Endothelial cell of umbilical vein (primary cell): ENCODE measurements at regions of chr3 and their contacts with region 1.

Region 1: DNA sequence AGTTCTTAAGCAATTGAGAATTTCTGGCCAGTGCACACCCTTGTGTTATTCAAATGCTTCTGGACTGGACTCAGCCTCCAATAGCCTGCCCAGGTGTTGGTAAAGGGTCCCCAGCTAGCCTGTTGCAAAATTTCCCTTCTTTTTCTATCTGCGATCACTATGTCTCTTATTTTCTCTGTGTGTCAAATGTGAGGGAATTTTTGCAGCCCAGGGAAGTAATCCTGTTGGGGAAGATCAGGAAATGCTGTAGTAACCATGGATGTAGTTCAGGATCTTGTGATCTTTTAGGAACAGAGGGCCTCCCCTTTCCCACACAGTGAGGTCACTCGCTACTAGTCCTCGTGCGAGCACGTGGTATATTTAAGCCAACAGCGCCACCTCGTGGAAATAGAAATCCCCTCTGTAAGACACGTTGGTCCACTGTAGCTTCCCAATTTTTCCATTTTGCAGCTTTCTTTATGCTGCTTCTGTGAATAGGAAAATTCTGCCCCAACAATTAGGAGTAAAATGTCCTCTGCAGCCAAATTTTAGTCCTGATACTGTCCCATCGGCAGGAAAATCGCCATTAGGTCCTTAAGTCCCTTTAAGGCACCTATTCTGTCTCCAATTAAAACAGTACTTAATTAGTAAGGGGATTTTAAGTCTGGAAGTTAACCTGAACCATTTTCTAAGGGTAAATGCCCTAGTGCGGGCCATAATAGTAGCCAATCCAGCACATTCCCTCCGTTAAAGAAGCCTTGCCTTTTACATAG is 4.0 kb upstream of the SMCO1 start:
- DNase-seq: peak; percentile 62
- H3K4me3 ChIP-seq: no peak overlapping the region
- H3K27ac ChIP-seq: no peak overlapping the region
- H3K4me1 ChIP-seq: no peaks in the 10 kb centered on the region
- H3K27me3 ChIP-seq: no peaks in the 10 kb centered on the region
- CTCF ChIP-seq: peak; percentile 32 to 44
- POLR2A ChIP-seq: no peak

Region 2: DNA sequence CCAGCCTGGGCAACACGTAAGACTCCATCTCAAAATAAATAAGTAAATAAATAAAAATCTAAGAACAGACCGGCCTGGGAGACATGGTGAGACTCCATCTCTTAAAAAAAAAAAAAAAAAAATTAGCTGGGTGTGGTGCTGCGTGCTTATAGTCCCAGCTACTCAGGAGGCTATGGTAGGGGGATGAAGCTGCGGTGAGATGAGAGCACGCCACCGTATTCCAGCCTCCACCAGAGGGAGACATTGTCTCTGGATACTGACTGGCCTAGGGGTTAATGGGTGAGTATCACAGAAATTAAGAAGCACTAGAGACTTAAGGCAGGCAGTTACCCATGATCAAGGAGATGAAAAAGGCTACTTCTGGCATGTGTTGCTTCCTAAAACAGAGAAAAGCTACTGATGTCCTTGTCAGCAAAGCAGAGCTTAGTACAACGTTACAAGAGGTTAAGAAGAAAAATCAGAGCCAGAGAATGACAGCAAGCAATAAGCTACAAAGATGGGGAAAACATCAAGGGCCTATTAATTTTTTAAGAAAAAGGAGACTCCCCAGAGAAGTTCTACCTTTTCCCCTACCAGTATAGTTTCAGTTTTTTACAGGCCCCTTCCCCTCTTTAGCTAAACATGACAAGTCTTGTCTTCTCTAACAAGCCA is 445.8 kb before region 1 on chr3:
- CTCF ChIA-PET with region 1: interaction called, 13 read pairs
- POLR2A ChIA-PET with region 1: no interaction called
- dilution Hi-C with region 1: no loop called
- intact Hi-C with region 1: loop called (anchors 1 kb)
- DNase-seq: peak; percentile 66
- H3K4me3 ChIP-seq: no peak overlapping the region
- H3K27ac ChIP-seq: no peak overlapping the region
- H3K4me1 ChIP-seq: no peaks in the 10 kb centered on the region
- H3K27me3 ChIP-seq: no peaks in the 10 kb centered on the region
- CTCF ChIP-seq: peak; percentile 72 to 80
- POLR2A ChIP-seq: no peak

Region 3: DNA sequence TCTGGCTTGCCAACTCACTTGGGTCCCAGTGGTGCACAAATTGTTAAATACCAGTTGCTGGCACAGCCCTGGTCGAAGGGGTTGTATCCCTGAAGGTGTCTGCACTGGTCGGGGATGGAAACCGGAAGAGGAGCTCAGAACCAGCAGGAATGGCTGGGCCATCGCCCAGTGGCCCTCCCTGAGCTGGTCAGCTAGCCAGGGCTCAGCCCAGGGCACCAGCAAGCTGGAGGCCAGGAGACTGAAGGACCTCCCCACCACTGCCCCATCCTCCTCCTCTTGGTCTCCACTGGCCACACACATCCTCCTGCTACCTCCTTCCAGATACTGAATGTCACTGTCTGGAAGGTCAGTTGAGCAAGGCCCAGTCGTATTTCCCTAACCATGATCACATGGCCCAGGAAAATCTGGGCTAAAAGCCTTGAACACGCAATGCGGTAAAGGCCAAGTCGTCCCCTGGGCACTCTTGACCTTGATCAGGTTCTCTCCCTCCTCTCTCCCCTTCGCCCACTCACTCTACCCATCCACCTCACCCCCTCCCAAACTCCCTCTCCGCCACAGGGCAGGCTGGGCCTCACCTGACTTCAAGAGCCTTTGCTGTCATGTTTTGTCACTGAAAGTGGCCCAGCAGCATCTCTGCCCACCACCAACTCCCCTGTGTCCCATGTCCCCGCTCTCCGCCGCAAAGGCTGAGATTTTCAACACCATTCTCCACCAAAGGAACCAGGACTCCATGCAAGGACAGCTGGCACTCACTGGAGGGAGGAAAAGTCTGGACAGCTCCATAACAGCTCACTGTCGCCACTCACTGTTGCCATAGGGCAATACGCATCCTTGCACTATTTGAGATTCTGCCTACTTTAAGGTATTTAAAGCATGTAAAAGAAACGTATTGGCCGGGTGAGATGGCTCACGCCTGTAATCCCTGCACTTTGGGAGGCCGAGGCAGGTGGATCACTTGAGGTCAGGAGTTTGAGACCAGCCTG is 320.1 kb before region 1 on chr3:
- CTCF ChIA-PET with region 1: no interaction called
- POLR2A ChIA-PET with region 1: no interaction called
- dilution Hi-C with region 1: no loop called
- intact Hi-C with region 1: loop called (anchors 5 kb)
- DNase-seq: no peak
- H3K4me3 ChIP-seq: no peak overlapping the region
- H3K27ac ChIP-seq: no peak overlapping the region
- H3K4me1 ChIP-seq: no peaks in the 10 kb centered on the region
- H3K27me3 ChIP-seq: peaks cover 2% of the 10 kb centered on the region in 2 experiments
- CTCF ChIP-seq: peak in 1 of 2 donors; percentile 9
- POLR2A ChIP-seq: no peak

Region 4: GRCh38 chr3:196251918-196252317 is 267.2 kb before region 1 on chr3:
- CTCF ChIA-PET with region 1: interaction called, 75 read pairs
- POLR2A ChIA-PET with region 1: no interaction called
- dilution Hi-C with region 1: no loop called
- intact Hi-C with region 1: loop called (anchors 1 kb)
- DNase-seq: no peak
- H3K4me3 ChIP-seq: no peak overlapping the region
- H3K27ac ChIP-seq: no peak overlapping the region
- H3K4me1 ChIP-seq: no peaks in the 10 kb centered on the region
- H3K27me3 ChIP-seq: no peaks in the 10 kb centered on the region
- CTCF ChIP-seq: no peak
- POLR2A ChIP-seq: no peak

Region 5: GRCh38 chr3:196292291-196292923 is 226.7 kb before region 1 on chr3:
- CTCF ChIA-PET with region 1: no interaction called
- POLR2A ChIA-PET with region 1: no interaction called
- dilution Hi-C with region 1: no loop called
- intact Hi-C with region 1: no loop called
- DNase-seq: no peak
- H3K4me3 ChIP-seq: no peak overlapping the region
- H3K27ac ChIP-seq: no peak overlapping the region
- H3K4me1 ChIP-seq: no peaks in the 10 kb centered on the region
- H3K27me3 ChIP-seq: no peaks in the 10 kb centered on the region
- CTCF ChIP-seq: no peak
- POLR2A ChIP-seq: no peak

Region 6: DNA sequence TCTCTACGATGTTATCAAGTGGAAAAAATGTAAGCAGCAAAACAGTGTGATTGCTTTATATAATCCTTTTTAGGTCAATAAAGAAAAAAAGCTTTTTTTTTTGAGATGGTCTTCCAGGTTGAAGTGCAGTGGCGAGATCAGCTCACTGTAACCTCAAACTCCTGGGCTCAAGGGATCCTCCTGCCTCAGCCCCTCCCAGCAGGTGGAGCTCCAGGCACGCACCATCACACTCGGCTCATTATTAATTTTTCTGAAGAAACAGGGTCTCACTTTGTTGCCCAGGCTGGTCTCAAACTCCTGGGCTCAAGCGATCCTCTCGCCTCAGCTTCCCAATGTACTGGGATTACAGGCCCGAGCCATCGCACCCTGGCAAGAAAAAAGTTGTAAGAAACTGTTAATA is 32.9 kb before region 1 on chr3:
- CTCF ChIA-PET with region 1: interaction called, 21 read pairs
- POLR2A ChIA-PET with region 1: no interaction called
- dilution Hi-C with region 1: no loop called
- intact Hi-C with region 1: no loop called
- DNase-seq: peak; percentile 10
- H3K4me3 ChIP-seq: no peak overlapping the region
- H3K27ac ChIP-seq: no peak overlapping the region
- H3K4me1 ChIP-seq: no peaks in the 10 kb centered on the region
- H3K27me3 ChIP-seq: no peaks in the 10 kb centered on the region
- CTCF ChIP-seq: peak in 1 of 2 donors; percentile 31
- POLR2A ChIP-seq: no peak